ENCODE measurements at regions of chr9 and their contacts with region 1.

Region 1: GRCh38 chr9:92764988-92765936 is 629 bp upstream of the BICD2 start:
- DNase-seq: peak; percentile 98
- ATAC-seq: peak; percentile 89 to 95 (median 89)
- H3K4me3 ChIP-seq: peak overlapping the region; percentile 53
- H3K4me3 Mint-ChIP-seq: peak overlapping the region; percentile 92
- H3K27ac ChIP-seq: peak overlapping the region; percentile 91
- H3K27ac Mint-ChIP-seq: peak overlapping the region; percentile 89 to 91
- H3K4me1 ChIP-seq: peaks cover 39% of the 10 kb centered on the region
- H3K4me1 Mint-ChIP-seq: peaks cover 40 to 43% of the 10 kb centered on the region in 2 donors
- H3K27me3 ChIP-seq: no peaks in the 10 kb centered on the region
- H3K27me3 Mint-ChIP-seq: no peaks in the 10 kb centered on the region
- CTCF ChIP-seq: peak; percentile 99

Region 2: DNA sequence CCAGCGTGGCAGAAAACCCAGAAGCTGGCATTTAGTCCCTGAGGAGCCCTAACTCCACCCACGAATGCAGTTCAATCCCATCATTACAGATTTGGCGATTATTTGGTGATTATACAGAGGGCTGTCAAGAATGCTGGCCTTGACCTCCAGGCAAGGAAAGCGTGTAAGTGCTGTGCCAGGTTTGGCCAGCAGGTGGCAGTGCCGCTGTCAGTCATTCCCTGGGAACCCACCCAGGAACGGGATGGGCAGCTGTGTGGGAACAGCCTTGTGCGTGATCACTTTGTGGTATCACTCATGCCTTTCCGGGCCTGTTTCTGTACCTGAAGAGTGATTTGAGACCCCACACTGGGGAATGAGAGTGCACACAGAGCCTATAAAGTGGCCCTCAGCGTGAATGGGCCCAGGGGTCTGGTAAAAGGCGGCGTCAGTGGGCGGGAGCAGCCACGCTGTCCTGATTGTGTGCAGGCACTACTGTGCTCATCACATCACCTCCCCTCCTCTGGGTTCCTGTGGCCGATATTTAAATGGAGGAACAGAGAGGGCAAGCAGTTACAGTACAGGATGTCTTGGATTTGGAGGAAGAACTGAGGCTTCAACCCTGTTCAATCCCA is 1030.8 kb before region 1 on chr9:
- intact Hi-C with region 1: no loop called
- DNase-seq: peak; percentile 64 to 70
- ATAC-seq: peak; percentile 52 to 77 (median 72)
- H3K4me3 ChIP-seq: no peak overlapping the region
- H3K4me3 Mint-ChIP-seq: no peak overlapping the region
- H3K27ac ChIP-seq: no peak overlapping the region
- H3K27ac Mint-ChIP-seq: no peak overlapping the region
- H3K4me1 ChIP-seq: no peaks in the 10 kb centered on the region
- H3K4me1 Mint-ChIP-seq: peaks cover 4 to 13% of the 10 kb centered on the region in 2 donors
- H3K27me3 ChIP-seq: no peaks in the 10 kb centered on the region
- H3K27me3 Mint-ChIP-seq: peaks cover 8% of the 10 kb centered on the region in 2 donors
- CTCF ChIP-seq: peak; percentile 96

Region 3: GRCh38 chr9:92115071-92115858 is 650.0 kb before region 1 on chr9 and contains the start of gene SPTLC1:
- intact Hi-C with region 1: loop called (anchors 10 kb)
- DNase-seq: peak; percentile 96 to 98
- ATAC-seq: peak; percentile 97 to 100 (median 97)
- H3K4me3 ChIP-seq: peak within 1 kb of the TSS; percentile 63
- H3K4me3 Mint-ChIP-seq: peak within 1 kb of the TSS; percentile 95
- H3K27ac ChIP-seq: peak within 1 kb of the TSS; percentile 90
- H3K27ac Mint-ChIP-seq: peak within 1 kb of the TSS; percentile 97 to 99
- H3K4me1 ChIP-seq: peaks cover 16% of the 10 kb centered on the region
- H3K4me1 Mint-ChIP-seq: peaks cover 28 to 46% of the 10 kb centered on the region in 2 donors
- H3K27me3 ChIP-seq: no peaks in the 10 kb centered on the region
- H3K27me3 Mint-ChIP-seq: peaks cover 6 to 7% of the 10 kb centered on the region in 2 donors
- CTCF ChIP-seq: no peak
- total RNA-seq, gene SPTLC1: 45.6 to 59.3 (median 47.8) TPM

Region 4: GRCh38 chr9:92669890-92670708 is 95.2 kb before region 1 on chr9 and contains the start of gene IPPK:
- intact Hi-C with region 1: loop called (anchors 1 kb)
- DNase-seq: peak; percentile 95 to 98
- ATAC-seq: peak; percentile 92 to 98 (median 93)
- H3K4me3 ChIP-seq: peak within 1 kb of the TSS; percentile 85
- H3K4me3 Mint-ChIP-seq: peak within 1 kb of the TSS; percentile 90
- H3K27ac ChIP-seq: peak within 1 kb of the TSS; percentile 96
- H3K27ac Mint-ChIP-seq: peak within 1 kb of the TSS; percentile 93 to 94
- H3K4me1 ChIP-seq: peaks cover 23% of the 10 kb centered on the region
- H3K4me1 Mint-ChIP-seq: peaks cover 20 to 27% of the 10 kb centered on the region in 2 donors
- H3K27me3 ChIP-seq: no peaks in the 10 kb centered on the region
- H3K27me3 Mint-ChIP-seq: no peaks in the 10 kb centered on the region
- CTCF ChIP-seq: no peak
- total RNA-seq, gene IPPK: 4.9 to 9.2 (median 6.7) TPM

Region 5: GRCh38 chr9:92716557-92716956 is 48.7 kb before region 1 on chr9:
- intact Hi-C with region 1: loop called (anchors 1 kb)
- DNase-seq: peak; percentile 75 to 84
- ATAC-seq: peak; percentile 75 to 84 (median 83)
- H3K4me3 ChIP-seq: no peak overlapping the region
- H3K4me3 Mint-ChIP-seq: no peak overlapping the region
- H3K27ac ChIP-seq: no peak overlapping the region
- H3K27ac Mint-ChIP-seq: peak overlapping the region in 1 of 2 donors; percentile 26
- H3K4me1 ChIP-seq: peaks cover 29% of the 10 kb centered on the region
- H3K4me1 Mint-ChIP-seq: peaks cover 26 to 35% of the 10 kb centered on the region in 2 donors
- H3K27me3 ChIP-seq: no peaks in the 10 kb centered on the region
- H3K27me3 Mint-ChIP-seq: no peaks in the 10 kb centered on the region
- CTCF ChIP-seq: peak; percentile 95

Region 6: GRCh38 chr9:92790542-92791527 is 25.6 kb after region 1 on chr9:
- intact Hi-C with region 1: loop called (anchors 1 kb)
- DNase-seq: peak; percentile 71 to 88
- ATAC-seq: peak; percentile 94 to 100 (median 99)
- H3K4me3 ChIP-seq: no peak overlapping the region
- H3K4me3 Mint-ChIP-seq: no peak overlapping the region
- H3K27ac ChIP-seq: no peak overlapping the region
- H3K27ac Mint-ChIP-seq: peak overlapping the region in 1 of 2 donors; percentile 78
- H3K4me1 ChIP-seq: no peaks in the 10 kb centered on the region
- H3K4me1 Mint-ChIP-seq: peaks cover 8 to 10% of the 10 kb centered on the region in 2 donors
- H3K27me3 ChIP-seq: no peaks in the 10 kb centered on the region
- H3K27me3 Mint-ChIP-seq: peaks cover 15 to 25% of the 10 kb centered on the region in 2 donors
- CTCF ChIP-seq: peak; percentile 90

Region 7: GRCh38 chr9:92877531-92878430 is 112.5 kb after region 1 on chr9 and contains the start of gene ZNF484:
- intact Hi-C with region 1: loop called (anchors 1 kb)
- DNase-seq: peak; percentile 92 to 100
- ATAC-seq: peak; percentile 97 to 100 (median 99)
- H3K4me3 ChIP-seq: peak within 1 kb of the TSS; percentile 71
- H3K4me3 Mint-ChIP-seq: peak within 1 kb of the TSS; percentile 99
- H3K27ac ChIP-seq: peak within 1 kb of the TSS; percentile 87
- H3K27ac Mint-ChIP-seq: peak within 1 kb of the TSS; percentile 97 to 100
- H3K4me1 ChIP-seq: peaks cover 7% of the 10 kb centered on the region
- H3K4me1 Mint-ChIP-seq: peaks cover 30 to 49% of the 10 kb centered on the region in 2 donors
- H3K27me3 ChIP-seq: no peaks in the 10 kb centered on the region
- H3K27me3 Mint-ChIP-seq: no peaks in the 10 kb centered on the region
- CTCF ChIP-seq: no peak
- total RNA-seq, gene ZNF484: 14.1 to 19.5 (median 16.2) TPM

Region 8: GRCh38 chr9:93276968-93277367 is 511.7 kb after region 1 on chr9:
- intact Hi-C with region 1: no loop called
- DNase-seq: no peak
- ATAC-seq: no peak
- H3K4me3 ChIP-seq: no peak overlapping the region
- H3K4me3 Mint-ChIP-seq: no peak overlapping the region
- H3K27ac ChIP-seq: no peak overlapping the region
- H3K27ac Mint-ChIP-seq: no peak overlapping the region
- H3K4me1 ChIP-seq: no peaks in the 10 kb centered on the region
- H3K4me1 Mint-ChIP-seq: no peaks in the 10 kb centered on the region
- H3K27me3 ChIP-seq: peaks cover 7% of the 10 kb centered on the region
- H3K27me3 Mint-ChIP-seq: peaks cover 44 to 80% of the 10 kb centered on the region in 2 donors
- CTCF ChIP-seq: no peak

Region 9: DNA sequence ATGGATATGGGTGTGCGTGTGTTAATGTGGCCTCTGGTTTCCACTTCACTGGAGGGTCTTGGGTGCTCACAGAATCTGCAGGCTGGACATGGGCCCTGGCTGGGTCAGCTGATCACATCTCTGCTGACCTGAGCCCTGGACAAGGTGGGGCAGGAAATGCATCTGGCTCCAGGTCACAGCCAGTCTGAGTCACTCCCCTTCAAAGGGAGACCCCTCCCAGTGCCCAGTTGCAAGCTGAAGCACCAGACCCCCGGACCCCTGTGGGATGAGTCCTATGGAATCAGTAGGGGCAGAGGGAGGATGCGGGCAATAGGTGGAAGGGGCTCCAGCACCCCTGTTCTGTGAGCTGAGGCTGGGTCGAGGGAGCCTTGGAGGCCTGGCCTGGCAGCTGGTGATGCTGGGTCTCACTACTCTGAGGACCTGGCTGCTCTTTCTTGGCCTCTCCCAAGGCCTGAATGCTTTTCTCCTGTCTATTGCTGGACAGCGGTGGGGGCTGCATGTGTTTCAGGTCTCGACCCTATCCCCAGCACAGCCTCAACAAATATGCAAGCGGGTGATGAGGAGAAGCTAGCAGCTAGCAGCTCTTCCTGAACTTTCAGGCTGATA is 865.6 kb after region 1 on chr9:
- intact Hi-C with region 1: no loop called
- DNase-seq: no peak
- ATAC-seq: no peak
- H3K4me3 ChIP-seq: no peak overlapping the region
- H3K4me3 Mint-ChIP-seq: no peak overlapping the region
- H3K27ac ChIP-seq: no peak overlapping the region
- H3K27ac Mint-ChIP-seq: no peak overlapping the region
- H3K4me1 ChIP-seq: no peaks in the 10 kb centered on the region
- H3K4me1 Mint-ChIP-seq: peaks cover 0 to 16% of the 10 kb centered on the region in 2 donors
- H3K27me3 ChIP-seq: no peaks in the 10 kb centered on the region
- H3K27me3 Mint-ChIP-seq: no peaks in the 10 kb centered on the region
- CTCF ChIP-seq: no peak